Thyroid gland (tissue), 4 donors: ENCODE measurements at regions of chr2 and their contacts with region 1.

Region 1: DNA sequence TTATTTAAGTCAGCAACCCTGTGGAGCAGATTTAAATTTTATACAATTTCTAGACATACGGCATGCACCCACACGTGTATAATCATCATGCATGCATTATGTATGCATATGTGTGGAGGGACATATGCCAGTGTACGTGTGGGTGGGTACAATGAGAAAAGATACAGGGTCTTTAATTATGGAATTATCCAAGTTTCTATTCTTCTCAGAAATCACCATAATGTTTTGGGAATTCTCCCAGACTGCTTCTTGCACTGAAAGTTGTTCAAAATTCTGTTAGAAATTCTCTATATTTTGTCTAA is 63.9 kb upstream of the TMEM18 start:
- DNase-seq: no peak
- H3K4me3 ChIP-seq: no peak overlapping the region
- H3K27ac ChIP-seq: no peak overlapping the region
- H3K4me1 ChIP-seq: peaks cover 4 to 10% of the 10 kb centered on the region in 2 donors
- H3K27me3 ChIP-seq: no peaks in the 10 kb centered on the region
- CTCF ChIP-seq: no peak
- POLR2A ChIP-seq: no peak

Region 2: DNA sequence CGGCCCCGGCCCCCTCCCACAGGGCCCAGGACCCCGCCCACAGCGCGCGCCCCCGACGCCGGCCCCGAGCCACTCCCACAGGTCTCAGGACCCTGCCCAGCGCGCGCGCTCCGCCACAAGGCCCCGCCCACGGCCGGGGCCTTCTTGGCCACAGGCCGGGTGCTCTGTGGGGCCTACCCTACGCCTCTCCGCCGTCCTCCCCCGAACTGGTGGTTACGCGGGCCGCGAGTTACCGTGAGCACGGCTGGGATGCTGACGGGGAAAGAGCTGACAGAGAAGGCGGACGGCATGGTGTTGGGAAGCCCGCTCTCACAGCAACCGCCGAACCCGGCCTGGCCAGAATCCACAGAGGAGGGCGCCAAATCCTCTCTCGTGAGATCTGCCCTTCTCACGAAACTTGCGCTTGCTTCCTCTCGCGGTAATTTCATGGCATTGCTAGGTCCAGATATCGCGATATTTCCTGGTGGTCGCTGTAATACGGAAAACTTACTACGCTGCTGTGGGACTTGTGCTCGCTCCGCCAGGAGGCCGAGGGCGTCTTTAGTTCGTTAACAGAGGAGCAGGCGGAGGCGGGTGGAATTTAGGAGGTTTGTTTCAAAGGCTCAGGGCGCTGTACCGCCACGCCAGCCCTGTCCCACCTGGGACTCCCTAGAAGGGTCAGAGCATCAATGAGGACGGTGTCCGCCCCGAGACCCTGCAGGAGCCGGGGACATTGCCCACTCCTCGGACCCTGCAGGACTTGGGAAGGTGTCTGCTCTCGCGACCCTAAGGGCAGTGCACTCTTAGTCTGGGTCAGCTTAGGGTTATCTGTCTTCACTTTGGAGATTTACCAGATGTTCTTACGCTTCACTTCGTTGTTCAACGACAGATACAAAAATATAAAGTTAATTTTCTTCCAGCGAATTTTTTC is 63.8 kb before region 1 on chr2 and contains the start of gene TMEM18:
- intact Hi-C with region 1: loop called (anchors 5 kb)
- DNase-seq: peak; percentile 93 to 95
- H3K4me3 ChIP-seq: peak within 1 kb of the TSS; percentile 61 to 99 (median 77)
- H3K27ac ChIP-seq: peak within 1 kb of the TSS; percentile 86 to 98 (median 95)
- H3K4me1 ChIP-seq: peaks cover 9 to 12% of the 10 kb centered on the region in 2 donors
- H3K27me3 ChIP-seq: no peaks in the 10 kb centered on the region
- CTCF ChIP-seq: peak in 5 of 6 experiments; percentile 8 to 44 (median 23)
- POLR2A ChIP-seq: peak; percentile 96 to 97
- total RNA-seq, gene TMEM18: 22.2 to 32.0 (median 28.7) TPM